SK-N-SH (cell line): ENCODE measurements at regions of chr20 and their contacts with region 1.

Region 1: DNA sequence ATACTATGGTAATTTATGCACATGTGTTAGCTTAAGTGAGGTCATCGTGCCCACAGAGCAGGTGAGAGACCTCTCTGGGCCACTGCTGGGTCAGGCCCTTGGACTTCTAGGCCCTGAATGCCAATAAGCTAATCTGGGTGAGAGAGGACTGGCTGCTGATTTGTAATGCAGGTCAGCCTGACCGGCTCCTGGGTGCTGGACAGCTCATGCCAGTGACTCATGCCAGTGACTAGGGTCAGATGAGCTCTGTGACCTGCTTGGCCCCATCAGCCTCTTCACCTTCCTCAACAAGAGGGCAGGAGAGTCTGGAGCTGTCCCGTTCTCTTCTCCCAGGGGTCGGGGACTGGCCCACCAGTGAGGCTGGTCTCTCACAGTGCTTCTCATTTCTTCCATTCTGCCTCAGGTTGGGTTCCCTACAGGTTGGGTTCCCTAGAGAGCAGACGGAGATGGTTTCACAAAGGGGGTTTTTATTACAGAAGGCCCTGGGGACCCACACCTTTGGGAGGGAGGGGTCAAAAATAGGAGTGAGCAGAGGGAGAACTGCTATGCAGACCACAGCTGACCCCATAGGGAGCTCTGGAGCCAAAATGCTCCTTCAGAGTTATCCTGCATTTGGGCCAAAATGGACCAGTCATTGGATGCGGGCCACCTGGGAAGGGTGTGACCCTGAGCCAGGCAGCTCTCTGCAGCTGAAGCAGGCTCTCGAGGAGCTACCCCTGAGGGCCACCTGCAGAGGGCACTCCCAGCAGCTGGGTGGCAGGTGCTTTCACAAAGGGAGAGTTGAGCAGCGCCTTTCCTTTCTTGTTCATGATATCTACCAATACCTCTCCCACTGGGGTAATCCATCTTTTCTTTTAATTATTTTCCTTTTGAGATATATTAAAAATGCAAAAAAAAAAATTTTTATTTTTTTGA is 2.2 kb upstream of the OXT start:
- DNase-seq: no peak
- H3K4me3 ChIP-seq: no peak overlapping the region
- H3K27ac ChIP-seq: no peak overlapping the region
- H3K4me1 ChIP-seq: no peaks in the 10 kb centered on the region
- H3K27me3 ChIP-seq: no peaks in the 10 kb centered on the region
- CTCF ChIP-seq: no peak
- EP300 ChIP-seq: no peak
- RAD21 ChIP-seq: no peak

Region 2: DNA sequence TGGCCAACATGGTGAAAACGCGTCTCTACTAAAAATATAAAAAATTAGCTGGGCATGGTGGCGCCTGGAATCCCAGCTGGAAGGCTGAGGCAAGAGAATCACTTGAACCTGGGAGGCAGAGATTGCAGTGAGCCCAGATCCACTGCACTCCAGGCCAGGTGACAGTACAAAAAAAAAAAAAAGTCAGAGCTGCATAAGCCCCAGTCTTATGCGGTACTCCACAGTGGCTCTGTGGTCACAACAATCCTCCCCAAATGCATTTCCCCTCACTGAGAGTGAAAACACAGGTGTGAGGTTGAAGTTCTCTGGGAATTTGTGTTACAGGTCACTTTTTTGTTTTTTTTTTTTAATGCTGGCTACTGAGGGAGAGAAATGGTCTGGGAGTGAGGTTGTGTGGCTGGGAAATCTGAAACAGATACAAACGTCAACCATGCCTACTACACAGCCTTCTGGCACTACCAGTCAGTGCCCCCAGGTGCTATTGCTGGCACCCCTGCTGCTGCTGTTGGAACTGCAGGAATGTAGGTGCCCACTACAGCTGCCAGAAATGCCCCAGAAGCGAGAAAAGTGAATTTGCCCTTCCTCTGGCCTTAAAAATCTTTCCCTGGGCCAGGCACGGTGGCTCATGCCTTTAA is 17.7 kb before region 1 on chr20:
- CTCF ChIA-PET with region 1: interaction called, 18 read pairs
- POLR2A ChIA-PET with region 1: no interaction called
- DNase-seq: no peak
- H3K4me3 ChIP-seq: no peak overlapping the region
- H3K27ac ChIP-seq: no peak overlapping the region
- H3K4me1 ChIP-seq: peaks cover 0 to 10% of the 10 kb centered on the region in 2 experiments; a peak in 1 of 4 replicates
- H3K27me3 ChIP-seq: no peaks in the 10 kb centered on the region
- CTCF ChIP-seq: no peak
- EP300 ChIP-seq: no peak
- RAD21 ChIP-seq: no peak

Region 3: DNA sequence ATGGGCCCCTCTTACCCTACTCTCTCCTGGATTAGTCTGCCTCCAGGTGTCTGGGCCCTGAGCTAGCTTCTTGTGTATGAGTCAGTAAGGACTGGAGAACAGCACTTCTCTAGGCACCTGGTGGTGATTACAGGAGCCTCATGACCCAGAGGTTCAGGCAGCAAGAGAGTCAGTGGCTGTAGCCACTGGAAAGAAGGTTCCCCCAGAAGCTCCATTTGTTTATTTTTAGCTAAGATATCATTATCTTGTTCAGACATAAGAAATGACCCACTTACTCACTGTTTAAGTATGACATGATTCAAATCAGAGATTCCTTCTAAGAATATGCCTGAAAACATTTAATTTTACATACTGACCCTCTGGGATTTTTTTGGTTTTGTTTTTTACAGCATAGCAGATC is 193.3 kb after region 1 on chr20:
- CTCF ChIA-PET with region 1: no interaction called
- POLR2A ChIA-PET with region 1: no interaction called
- DNase-seq: no peak
- H3K4me3 ChIP-seq: no peak overlapping the region
- H3K27ac ChIP-seq: no peak overlapping the region
- H3K4me1 ChIP-seq: no peaks in the 10 kb centered on the region; a peak in 1 of 4 replicates
- H3K27me3 ChIP-seq: no peaks in the 10 kb centered on the region
- CTCF ChIP-seq: no peak
- EP300 ChIP-seq: no peak
- RAD21 ChIP-seq: no peak

Region 4: DNA sequence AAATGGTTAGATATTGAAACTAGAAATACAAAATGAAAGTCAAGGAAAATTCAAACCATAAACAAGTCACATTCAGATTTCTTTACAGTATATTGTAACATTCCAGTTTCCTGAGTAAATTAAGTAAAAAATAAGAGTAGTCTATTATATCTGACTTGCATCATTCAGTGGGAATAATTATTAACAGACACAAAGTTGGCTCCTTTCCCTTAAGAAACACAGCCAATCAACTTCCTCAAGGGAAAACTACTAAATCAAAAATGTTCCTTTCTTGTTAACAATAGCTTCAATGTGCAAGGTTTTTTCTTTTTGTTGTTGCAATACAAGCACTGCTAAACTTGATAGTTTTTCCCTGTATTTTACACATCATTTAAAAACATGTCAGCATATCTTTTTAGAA is 305.1 kb after region 1 on chr20:
- CTCF ChIA-PET with region 1: no interaction called
- POLR2A ChIA-PET with region 1: no interaction called
- DNase-seq: no peak
- H3K4me3 ChIP-seq: no peak overlapping the region
- H3K27ac ChIP-seq: peak overlapping the region in 1 of 2 experiments; percentile 3; a peak in 1 of 4 replicates
- H3K4me1 ChIP-seq: no peaks in the 10 kb centered on the region
- H3K27me3 ChIP-seq: no peaks in the 10 kb centered on the region
- CTCF ChIP-seq: no peak
- EP300 ChIP-seq: no peak
- RAD21 ChIP-seq: no peak